CD4-positive, alpha-beta memory T cell (primary cell): ENCODE measurements at regions of chr10 and their contacts with region 1.

Region 1: DNA sequence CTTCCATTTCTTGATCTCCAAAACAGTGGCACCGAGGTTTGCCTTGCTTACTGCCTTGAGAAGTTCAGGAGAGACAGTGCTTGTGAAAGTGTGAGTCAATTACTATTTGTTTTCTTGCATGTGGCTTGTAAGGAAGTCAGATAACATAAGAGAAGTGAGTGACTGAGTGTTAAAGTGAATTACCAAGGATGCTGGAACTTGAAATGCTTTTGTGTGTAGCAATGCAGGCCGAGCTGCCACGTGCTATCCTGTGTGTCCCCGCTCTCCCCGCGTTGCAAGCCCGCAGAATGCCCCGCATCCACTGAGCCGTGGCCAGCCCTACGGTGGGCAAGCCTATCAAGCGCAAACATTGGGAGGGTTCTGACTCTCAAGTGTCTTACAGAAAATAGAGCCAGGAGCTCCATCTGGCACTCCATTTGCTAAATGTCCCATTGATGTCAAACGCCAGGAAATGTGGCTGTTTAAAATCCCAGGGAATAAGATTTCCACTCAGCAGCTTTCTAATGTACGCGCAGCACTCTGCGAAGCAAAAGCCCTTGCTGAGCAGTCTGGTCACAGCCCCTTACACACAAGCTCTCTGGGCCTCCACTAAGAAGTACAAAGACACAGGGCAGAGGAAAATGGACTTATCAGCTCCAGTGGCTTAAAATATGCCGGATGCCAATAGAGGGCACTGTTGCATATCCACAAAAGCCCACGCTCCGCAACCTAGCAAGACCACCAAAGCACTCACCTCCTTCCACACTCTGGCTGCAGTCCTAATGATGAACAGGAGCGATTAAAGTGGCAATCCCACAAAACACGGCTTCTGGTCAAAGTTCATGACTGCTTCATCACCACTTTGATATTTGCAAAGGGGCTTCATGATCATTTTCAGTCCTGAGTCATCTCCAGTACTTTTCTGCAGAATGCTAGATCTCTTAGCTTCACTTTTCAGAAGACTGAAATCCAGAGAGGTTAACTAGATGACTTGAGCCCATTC is 158.0 kb upstream of the ITGB1 start:
- DNase-seq: peak in 4 of 5 donors; percentile 43 to 66 (median 54)
- H3K4me3 ChIP-seq: peak overlapping the region; percentile 21 to 36
- H3K4me3 Mint-ChIP-seq: peak overlapping the region; percentile 74 to 92 (median 86)
- H3K27ac ChIP-seq: peak overlapping the region; percentile 74
- H3K27ac Mint-ChIP-seq: peak overlapping the region; percentile 91 to 98 (median 96)
- H3K4me1 ChIP-seq: peaks cover 99% of the 10 kb centered on the region
- H3K4me1 Mint-ChIP-seq: peaks cover 77 to 100% (median 86%) of the 10 kb centered on the region in 4 donors
- H3K27me3 ChIP-seq: no peaks in the 10 kb centered on the region
- H3K27me3 Mint-ChIP-seq: no peaks in the 10 kb centered on the region

Region 2: GRCh38 chr10:32795598-32796183 is 320.3 kb before region 1 on chr10:
- CTCF ChIA-PET with region 1: no interaction called
- POLR2A ChIA-PET with region 1: no interaction called
- intact Hi-C with region 1: loop called (anchors 5 kb)
- DNase-seq: peak in 4 of 5 donors; percentile 34 to 46 (median 35)
- H3K4me3 ChIP-seq: no peak overlapping the region
- H3K4me3 Mint-ChIP-seq: no peak overlapping the region
- H3K27ac ChIP-seq: no peak overlapping the region
- H3K27ac Mint-ChIP-seq: peak overlapping the region in 4 of 7 donors; percentile 1 to 47 (median 22)
- H3K4me1 ChIP-seq: no peaks in the 10 kb centered on the region
- H3K4me1 Mint-ChIP-seq: peaks cover 0 to 5% (median 2%) of the 10 kb centered on the region in 4 donors
- H3K27me3 ChIP-seq: no peaks in the 10 kb centered on the region
- H3K27me3 Mint-ChIP-seq: no peaks in the 10 kb centered on the region

Region 3: GRCh38 chr10:33025039-33025438 is 91.0 kb before region 1 on chr10:
- CTCF ChIA-PET with region 1: interaction called, 8 read pairs
- POLR2A ChIA-PET with region 1: interaction called, 80 read pairs
- intact Hi-C with region 1: loop called (anchors 1 kb)
- DNase-seq: no peak
- H3K4me3 ChIP-seq: no peak overlapping the region
- H3K4me3 Mint-ChIP-seq: peak overlapping the region in 4 of 8 donors; percentile 3 to 67 (median 10)
- H3K27ac ChIP-seq: no peak overlapping the region
- H3K27ac Mint-ChIP-seq: peak overlapping the region in 6 of 7 donors; percentile 13 to 85 (median 65)
- H3K4me1 ChIP-seq: peaks cover 63% of the 10 kb centered on the region
- H3K4me1 Mint-ChIP-seq: peaks cover 47 to 73% (median 55%) of the 10 kb centered on the region in 4 donors
- H3K27me3 ChIP-seq: no peaks in the 10 kb centered on the region
- H3K27me3 Mint-ChIP-seq: no peaks in the 10 kb centered on the region

Region 4: GRCh38 chr10:33073641-33074415 is 42.2 kb before region 1 on chr10:
- CTCF ChIA-PET with region 1: interaction called, 6 read pairs
- POLR2A ChIA-PET with region 1: interaction called, 29 read pairs
- intact Hi-C with region 1: no loop called
- DNase-seq: no peak
- H3K4me3 ChIP-seq: no peak overlapping the region
- H3K4me3 Mint-ChIP-seq: peak overlapping the region in 1 of 8 donors; percentile 18
- H3K27ac ChIP-seq: no peak overlapping the region
- H3K27ac Mint-ChIP-seq: no peak overlapping the region
- H3K4me1 ChIP-seq: peaks cover 7% of the 10 kb centered on the region
- H3K4me1 Mint-ChIP-seq: peaks cover 17 to 57% (median 28%) of the 10 kb centered on the region in 4 donors
- H3K27me3 ChIP-seq: no peaks in the 10 kb centered on the region
- H3K27me3 Mint-ChIP-seq: no peaks in the 10 kb centered on the region

Region 5: DNA sequence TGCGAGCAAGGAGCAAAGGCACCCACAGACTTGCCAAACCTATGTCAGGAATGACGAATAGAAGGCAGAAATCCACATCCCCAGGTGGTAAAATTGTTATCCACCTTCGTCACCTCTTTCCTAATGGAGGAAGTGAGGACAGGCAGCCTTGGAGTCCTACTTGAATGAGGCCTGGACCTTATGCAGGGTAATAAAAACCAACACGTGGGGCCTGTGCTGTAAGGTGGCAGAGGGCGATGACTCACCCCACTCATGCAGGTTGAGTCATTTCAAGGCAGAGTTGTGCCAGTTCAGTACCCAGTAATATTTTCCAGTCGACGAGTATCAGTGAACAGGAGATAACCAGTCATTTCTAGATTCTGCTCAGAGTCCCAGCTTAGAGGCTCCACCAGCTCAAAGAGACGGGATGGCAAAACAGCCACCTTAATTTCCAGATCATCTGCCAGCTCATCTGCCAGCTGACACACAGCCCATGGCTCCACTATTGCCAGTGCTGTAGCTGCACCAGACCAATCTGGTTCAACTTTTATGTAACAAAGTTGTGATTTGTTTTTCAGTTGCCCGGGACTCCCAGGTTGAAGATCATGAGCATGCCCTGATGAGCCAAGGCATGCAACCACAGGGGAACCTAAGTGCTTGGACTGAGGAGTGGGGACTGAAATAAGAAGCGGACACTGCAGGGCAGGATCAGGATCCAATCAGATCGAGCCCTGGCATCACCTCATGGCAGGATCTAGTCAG is 18.2 kb after region 1 on chr10:
- CTCF ChIA-PET with region 1: interaction called, 346 read pairs
- POLR2A ChIA-PET with region 1: interaction called, 2,213 read pairs
- intact Hi-C with region 1: loop called (anchors 1 kb)
- DNase-seq: peak; percentile 59 to 96 (median 73)
- H3K4me3 ChIP-seq: no peak overlapping the region
- H3K4me3 Mint-ChIP-seq: peak overlapping the region; percentile 13 to 84 (median 62)
- H3K27ac ChIP-seq: peak overlapping the region; percentile 84
- H3K27ac Mint-ChIP-seq: peak overlapping the region; percentile 89 to 100 (median 100)
- H3K4me1 ChIP-seq: peaks cover 98% of the 10 kb centered on the region
- H3K4me1 Mint-ChIP-seq: peaks cover 71 to 97% (median 85%) of the 10 kb centered on the region in 4 donors
- H3K27me3 ChIP-seq: no peaks in the 10 kb centered on the region
- H3K27me3 Mint-ChIP-seq: no peaks in the 10 kb centered on the region

Region 6: GRCh38 chr10:33193057-33193700 is 77.2 kb after region 1 on chr10:
- CTCF ChIA-PET with region 1: interaction called, 15 read pairs
- POLR2A ChIA-PET with region 1: interaction called, 10 read pairs
- intact Hi-C with region 1: no loop called
- DNase-seq: peak; percentile 64 to 70 (median 65)
- H3K4me3 ChIP-seq: no peak overlapping the region
- H3K4me3 Mint-ChIP-seq: peak overlapping the region in 1 of 8 donors; percentile 43
- H3K27ac ChIP-seq: no peak overlapping the region
- H3K27ac Mint-ChIP-seq: peak overlapping the region in 1 of 7 donors; percentile 7
- H3K4me1 ChIP-seq: peaks cover 6% of the 10 kb centered on the region
- H3K4me1 Mint-ChIP-seq: peaks cover 0 to 2% (median 0%) of the 10 kb centered on the region in 4 donors
- H3K27me3 ChIP-seq: no peaks in the 10 kb centered on the region
- H3K27me3 Mint-ChIP-seq: peaks cover 0 to 3% of the 10 kb centered on the region in 2 donors